Transverse colon (tissue), 4 donors: ENCODE measurements at regions of chr9 and their contacts with region 1.

Region 1: DNA sequence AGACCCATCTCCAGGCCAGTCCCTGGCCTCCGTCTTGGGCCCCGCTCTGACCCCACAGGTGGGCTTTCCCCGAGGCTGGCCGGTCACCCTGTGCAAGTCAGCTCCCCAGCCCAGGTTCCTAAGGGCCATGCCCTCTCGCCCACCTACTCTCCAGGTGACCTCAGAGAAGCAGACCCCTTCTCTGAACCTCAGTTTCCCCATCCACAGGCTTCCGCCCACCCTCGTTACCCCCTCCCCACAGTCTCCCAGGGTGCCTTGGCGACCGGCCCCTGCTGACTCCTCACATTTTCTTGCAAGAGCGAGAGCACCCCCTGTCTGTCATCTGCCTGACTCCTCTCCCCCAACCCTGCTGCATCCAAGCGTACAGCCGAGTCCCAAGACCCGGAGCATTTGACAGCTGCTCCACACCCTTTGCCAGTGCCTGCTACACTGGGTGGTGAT is 51.2 kb upstream of the ORM1 start:
- DNase-seq: peak; percentile 23
- H3K4me3 ChIP-seq: no peak overlapping the region
- H3K27ac ChIP-seq: no peak overlapping the region
- H3K4me1 ChIP-seq: no peaks in the 10 kb centered on the region
- H3K27me3 ChIP-seq: no peaks in the 10 kb centered on the region
- CTCF ChIP-seq: peak; percentile 33 to 53 (median 52)
- EP300 ChIP-seq: no peak
- POLR2A ChIP-seq: no peak

Region 2: DNA sequence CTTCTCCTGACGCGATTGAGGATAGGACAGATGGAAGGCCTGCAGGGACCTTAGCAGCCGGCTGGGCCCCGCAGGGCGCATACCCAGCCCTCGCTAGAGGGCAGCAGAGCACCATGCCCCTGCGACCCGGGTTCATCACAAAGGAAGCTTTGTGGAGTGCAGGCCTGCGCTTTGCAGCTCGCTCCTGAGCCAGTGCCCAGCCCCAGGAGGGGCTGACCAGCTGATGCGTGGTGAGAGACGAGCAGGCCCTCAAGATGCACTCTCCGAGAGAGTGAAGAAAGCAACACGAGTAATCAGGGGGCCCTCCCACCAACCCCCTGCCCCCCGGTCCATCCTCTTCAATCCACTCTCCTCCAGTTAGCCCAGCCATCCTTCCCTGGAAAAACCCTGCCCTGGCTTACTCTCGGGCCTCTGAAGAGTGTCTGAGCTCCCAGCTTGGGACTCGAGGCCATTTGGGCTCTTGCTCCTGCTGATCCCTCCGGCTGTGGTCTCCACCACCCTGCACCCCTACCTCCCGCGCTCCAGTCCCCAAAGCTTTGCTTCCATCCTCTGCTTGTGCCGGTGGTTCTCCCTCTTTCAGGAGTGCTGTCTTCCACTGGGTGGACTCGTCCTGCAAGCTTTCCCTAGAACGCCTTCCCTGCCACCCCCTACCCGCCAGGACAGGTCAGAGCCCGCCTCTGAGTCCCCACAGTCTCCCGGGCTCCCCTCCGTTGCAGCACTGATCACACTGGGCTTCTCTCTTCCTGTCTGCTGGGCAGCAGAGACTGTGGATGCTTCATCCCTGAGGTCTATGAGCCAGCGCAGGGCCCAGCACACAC is 163.4 kb before region 1 on chr9:
- in situ Hi-C with region 1: no loop called
- intact Hi-C with region 1: loop called (anchors 5 kb)
- DNase-seq: peak; percentile 83
- H3K4me3 ChIP-seq: no peak overlapping the region
- H3K27ac ChIP-seq: no peak overlapping the region
- H3K4me1 ChIP-seq: peaks cover 0 to 5% (median 0%) of the 10 kb centered on the region in 4 donors
- H3K27me3 ChIP-seq: peaks cover 7% of the 10 kb centered on the region
- CTCF ChIP-seq: peak; percentile 85 to 94 (median 88)
- EP300 ChIP-seq: no peak
- POLR2A ChIP-seq: no peak

Region 3: GRCh38 chr9:114155263-114155972 is 116.2 kb before region 1 on chr9 and contains the start of gene COL27A1:
- in situ Hi-C with region 1: no loop called
- intact Hi-C with region 1: loop called (anchors 5 kb)
- DNase-seq: peak; percentile 82
- H3K4me3 ChIP-seq: peak within 1 kb of the TSS; percentile 34 to 68 (median 53)
- H3K27ac ChIP-seq: peak within 1 kb of the TSS; percentile 65 to 77 (median 72)
- H3K4me1 ChIP-seq: peaks cover 11 to 24% (median 16%) of the 10 kb centered on the region in 4 donors
- H3K27me3 ChIP-seq: peaks cover 38% of the 10 kb centered on the region
- CTCF ChIP-seq: peak; percentile 87 to 96 (median 92)
- EP300 ChIP-seq: no peak
- POLR2A ChIP-seq: no peak
- total RNA-seq, gene COL27A1: 2.1 to 9.0 (median 3.8) TPM